Breast epithelium (tissue), 4 donors: ENCODE measurements at regions of chrX and their contacts with region 1.

Region 1: DNA sequence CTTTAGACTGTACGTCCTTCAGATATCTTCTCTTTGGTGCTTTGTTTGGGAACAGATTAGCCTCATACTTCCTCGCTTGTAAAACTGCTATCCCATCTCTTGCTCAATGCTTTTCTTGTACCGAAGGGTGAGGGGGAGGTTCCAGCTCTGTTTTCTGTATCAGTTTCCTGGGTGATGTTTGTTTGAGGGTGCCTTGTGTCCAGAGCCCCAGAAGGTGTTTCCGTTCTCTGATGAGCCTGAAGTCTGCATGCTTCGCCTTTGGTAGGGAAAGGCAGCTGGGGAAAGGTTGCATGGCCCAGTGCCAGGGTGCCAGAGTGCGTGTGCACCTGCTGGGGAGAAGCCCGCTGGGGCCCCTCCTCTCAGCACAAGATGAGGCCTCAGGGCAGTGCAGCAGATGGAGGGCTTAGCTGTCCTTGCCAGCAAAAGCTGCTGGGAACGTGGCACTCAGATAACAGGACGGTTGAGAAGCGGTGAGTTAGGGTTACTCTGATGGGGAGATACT is 73.7 kb downstream of the TBL1X start:
- DNase-seq: no peak
- H3K4me3 ChIP-seq: no peak overlapping the region
- H3K27ac ChIP-seq: no peak overlapping the region
- H3K4me1 ChIP-seq: no peaks in the 10 kb centered on the region
- H3K27me3 ChIP-seq: no peaks in the 10 kb centered on the region
- CTCF ChIP-seq: no peak
- POLR2A ChIP-seq: no peak

Region 2: GRCh38 chrX:9312922-9313867 is 225.4 kb before region 1 on chrX:
- intact Hi-C with region 1: no loop called
- DNase-seq: no peak
- H3K4me3 ChIP-seq: no peak overlapping the region
- H3K27ac ChIP-seq: no peak overlapping the region
- H3K4me1 ChIP-seq: no peaks in the 10 kb centered on the region
- H3K27me3 ChIP-seq: peaks cover 0 to 13% of the 10 kb centered on the region in 2 donors
- CTCF ChIP-seq: peak in 2 of 3 donors; percentile 26 to 28
- POLR2A ChIP-seq: no peak

Region 3: DNA sequence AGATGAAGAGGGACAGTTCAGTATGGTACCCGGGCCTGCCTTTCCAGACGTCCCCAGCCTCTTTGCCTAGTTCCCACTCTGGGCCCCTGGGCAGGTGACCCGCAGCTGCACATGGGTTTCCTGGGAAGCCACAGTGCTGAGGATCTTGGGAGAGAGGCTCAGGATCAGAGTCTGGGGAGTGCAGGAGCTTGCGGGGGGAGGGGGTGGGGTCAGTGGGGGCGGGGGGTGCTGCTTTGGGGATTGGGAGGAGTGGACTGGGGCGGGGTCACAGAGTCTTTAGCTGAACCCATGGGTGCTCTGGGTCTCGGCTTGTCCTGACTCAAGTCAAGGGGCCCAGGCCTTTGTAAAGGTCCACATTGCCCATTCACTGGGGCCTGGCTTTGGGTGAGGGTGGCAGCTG is 10.1 kb before region 1 on chrX:
- intact Hi-C with region 1: loop called (anchors 1 kb)
- DNase-seq: no peak
- H3K4me3 ChIP-seq: no peak overlapping the region
- H3K27ac ChIP-seq: no peak overlapping the region
- H3K4me1 ChIP-seq: no peaks in the 10 kb centered on the region
- H3K27me3 ChIP-seq: peaks cover 0 to 26% of the 10 kb centered on the region in 2 donors
- CTCF ChIP-seq: no peak
- POLR2A ChIP-seq: no peak